GM13977 (cell line): ENCODE measurements at regions of chr21 and their contacts with region 1.

Region 1: DNA sequence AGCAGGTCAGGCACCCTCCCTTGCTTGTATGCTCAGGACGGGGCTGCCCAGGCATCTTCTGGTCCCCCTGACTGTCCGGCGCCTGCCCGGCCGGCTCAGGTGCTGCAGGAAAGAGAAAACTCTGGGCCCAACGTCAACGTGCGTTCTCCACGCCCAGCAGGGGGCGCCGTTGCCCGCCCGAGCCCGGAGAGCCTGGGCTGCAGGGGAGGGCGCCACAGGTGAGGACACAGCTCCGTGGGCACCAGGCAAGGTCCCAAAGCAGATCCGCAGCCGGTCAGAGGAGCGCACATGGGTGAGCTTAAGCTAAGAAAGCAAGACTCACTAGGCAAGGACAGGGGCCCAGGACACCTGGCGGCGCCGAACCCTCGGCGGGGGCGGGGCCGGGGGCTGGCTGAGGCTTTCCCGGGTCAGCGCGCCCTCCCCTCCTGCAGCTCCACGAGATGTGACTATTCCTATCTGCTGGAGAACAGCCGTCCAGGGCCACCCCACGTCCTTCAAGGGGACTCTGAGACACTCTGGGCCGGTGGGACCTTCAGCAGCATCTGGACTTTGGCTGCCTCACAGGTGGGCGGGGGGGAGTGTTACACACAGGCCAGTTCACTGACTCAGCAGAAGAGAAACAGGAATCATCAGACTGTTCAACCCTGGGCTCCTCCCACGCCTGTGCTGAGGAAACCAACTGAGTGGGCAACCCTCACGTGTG is 29.3 kb downstream of the KRTAP10-1 start:
- DNase-seq: peak; percentile 92
- CTCF ChIP-seq: peak; percentile 96

Region 2: GRCh38 chr21:44939532-44940115 is 429.0 kb after region 1 on chr21 and contains the start of gene SLX9:
- in situ Hi-C with region 1: loop called (anchors 25 kb)
- DNase-seq: peak; percentile 95
- CTCF ChIP-seq: no peak